CD4-positive, alpha-beta memory T cell (primary cell): ENCODE measurements at regions of chrX and their contacts with region 1.

Region 1: GRCh38 chrX:149470955-149471354 is 34.2 kb downstream of the IDS start:
- DNase-seq: peak; percentile 44 to 55 (median 49)
- H3K4me3 ChIP-seq: no peak overlapping the region
- H3K4me3 Mint-ChIP-seq: no peak overlapping the region
- H3K27ac ChIP-seq: no peak overlapping the region
- H3K27ac Mint-ChIP-seq: no peak overlapping the region
- H3K4me1 ChIP-seq: no peaks in the 10 kb centered on the region
- H3K4me1 Mint-ChIP-seq: peaks cover 0 to 6% (median 4%) of the 10 kb centered on the region in 4 donors
- H3K27me3 ChIP-seq: no peaks in the 10 kb centered on the region
- H3K27me3 Mint-ChIP-seq: no peaks in the 10 kb centered on the region

Region 2: DNA sequence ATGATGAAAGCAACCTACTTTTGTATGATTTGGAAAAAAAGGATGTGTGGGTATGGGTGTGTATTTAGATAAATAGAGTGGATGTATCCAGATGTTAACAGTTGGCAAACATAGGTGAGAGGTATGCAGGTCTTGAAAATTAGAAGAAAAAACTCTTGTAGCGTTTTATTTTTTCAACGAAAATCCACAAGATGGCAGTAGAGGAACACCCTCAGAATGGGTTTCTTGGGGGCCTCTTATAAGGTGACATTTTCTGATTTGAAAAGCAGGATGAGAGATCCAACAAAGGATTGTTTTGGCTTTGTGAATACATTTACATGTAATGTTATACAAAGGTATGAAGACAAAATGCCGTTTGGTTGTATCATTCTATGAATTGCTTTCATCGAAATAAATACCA is 1421.5 kb before region 1 on chrX:
- CTCF ChIA-PET with region 1: interaction called, 10 read pairs
- POLR2A ChIA-PET with region 1: no interaction called
- intact Hi-C with region 1: loop called (anchors 2 kb)
- DNase-seq: peak in 4 of 5 donors; percentile 18 to 33 (median 28)
- H3K4me3 ChIP-seq: no peak overlapping the region
- H3K4me3 Mint-ChIP-seq: no peak overlapping the region
- H3K27ac ChIP-seq: no peak overlapping the region
- H3K27ac Mint-ChIP-seq: no peak overlapping the region
- H3K4me1 ChIP-seq: no peaks in the 10 kb centered on the region
- H3K4me1 Mint-ChIP-seq: no peaks in the 10 kb centered on the region
- H3K27me3 ChIP-seq: no peaks in the 10 kb centered on the region
- H3K27me3 Mint-ChIP-seq: peaks cover 0 to 1% of the 10 kb centered on the region in 2 donors

Region 3: DNA sequence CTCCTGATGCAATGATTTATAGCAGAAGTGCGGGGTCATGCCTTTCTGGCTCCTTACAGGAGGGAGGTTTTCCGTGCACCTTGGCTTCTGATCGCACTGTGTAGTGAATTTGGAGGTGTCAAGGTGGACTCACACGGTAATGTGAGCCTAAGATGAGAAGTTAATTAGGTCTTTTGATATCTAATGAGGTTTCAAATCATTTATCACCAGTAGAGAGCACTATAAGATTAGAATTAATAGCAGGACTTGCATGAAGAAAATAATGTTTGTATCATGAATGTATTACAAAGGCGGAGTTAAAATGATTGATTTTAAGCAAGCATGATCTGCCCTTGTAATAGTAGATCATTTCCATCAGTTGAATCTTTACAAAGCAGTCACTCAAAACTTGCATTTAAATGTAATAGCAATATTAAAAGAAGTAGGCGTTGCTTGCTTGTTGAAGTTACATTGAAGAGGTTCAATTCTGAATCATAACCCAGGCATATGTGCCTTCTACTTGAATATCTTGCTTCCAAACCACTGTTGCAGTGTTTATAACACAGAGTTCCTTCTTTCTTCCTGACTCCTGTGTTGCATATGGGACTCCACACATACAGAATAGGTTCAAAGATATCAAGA is 1337.7 kb before region 1 on chrX:
- CTCF ChIA-PET with region 1: no interaction called
- POLR2A ChIA-PET with region 1: no interaction called
- intact Hi-C with region 1: loop called (anchors 1 kb)
- DNase-seq: peak in 4 of 5 donors; percentile 10 to 26 (median 18)
- H3K4me3 ChIP-seq: no peak overlapping the region
- H3K4me3 Mint-ChIP-seq: no peak overlapping the region
- H3K27ac ChIP-seq: no peak overlapping the region
- H3K27ac Mint-ChIP-seq: no peak overlapping the region
- H3K4me1 ChIP-seq: no peaks in the 10 kb centered on the region
- H3K4me1 Mint-ChIP-seq: no peaks in the 10 kb centered on the region
- H3K27me3 ChIP-seq: no peaks in the 10 kb centered on the region
- H3K27me3 Mint-ChIP-seq: peaks cover 0 to 2% of the 10 kb centered on the region in 2 donors

Region 4: DNA sequence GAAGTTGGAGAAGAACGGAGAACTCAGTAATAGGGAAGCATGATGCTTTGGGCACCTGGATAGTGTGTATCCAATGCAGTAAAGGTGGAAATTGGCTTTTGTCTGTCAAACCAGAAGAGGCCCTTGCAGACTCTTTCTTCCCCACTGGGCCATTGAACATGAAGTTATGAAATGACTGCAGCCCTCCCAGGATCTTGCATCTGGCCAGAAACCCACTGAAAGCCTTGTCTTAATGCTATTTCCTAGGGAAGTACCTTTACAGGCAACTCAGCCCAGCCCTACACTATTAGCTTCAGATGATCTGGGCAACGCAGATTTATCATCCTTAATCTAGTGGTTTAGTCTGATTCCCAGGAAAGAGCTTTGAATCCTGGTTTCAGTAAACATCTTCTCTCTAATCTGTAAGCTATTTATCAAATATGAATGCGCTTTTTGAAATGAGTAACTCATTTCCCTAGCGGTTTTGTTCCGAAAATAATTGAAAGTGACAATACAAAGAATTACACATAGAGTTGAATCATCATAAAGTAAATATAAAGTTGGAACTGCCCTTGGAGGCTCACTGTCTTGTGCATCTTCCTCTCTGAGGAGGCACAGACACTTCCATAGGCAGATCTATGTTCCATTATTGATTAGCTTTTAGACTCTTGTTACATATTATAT is 430.0 kb before region 1 on chrX:
- CTCF ChIA-PET with region 1: no interaction called
- POLR2A ChIA-PET with region 1: no interaction called
- intact Hi-C with region 1: no loop called
- DNase-seq: no peak
- H3K4me3 ChIP-seq: no peak overlapping the region
- H3K4me3 Mint-ChIP-seq: no peak overlapping the region
- H3K27ac ChIP-seq: no peak overlapping the region
- H3K27ac Mint-ChIP-seq: no peak overlapping the region
- H3K4me1 ChIP-seq: no peaks in the 10 kb centered on the region
- H3K4me1 Mint-ChIP-seq: no peaks in the 10 kb centered on the region
- H3K27me3 ChIP-seq: no peaks in the 10 kb centered on the region
- H3K27me3 Mint-ChIP-seq: no peaks in the 10 kb centered on the region

Region 5: GRCh38 chrX:149286940-149287349 is 184.0 kb before region 1 on chrX:
- CTCF ChIA-PET with region 1: interaction called, 6 read pairs
- POLR2A ChIA-PET with region 1: no interaction called
- intact Hi-C with region 1: loop called (anchors 5 kb)
- DNase-seq: peak in 4 of 5 donors; percentile 38 to 50 (median 46)
- H3K4me3 ChIP-seq: no peak overlapping the region
- H3K4me3 Mint-ChIP-seq: no peak overlapping the region
- H3K27ac ChIP-seq: no peak overlapping the region
- H3K27ac Mint-ChIP-seq: no peak overlapping the region
- H3K4me1 ChIP-seq: no peaks in the 10 kb centered on the region
- H3K4me1 Mint-ChIP-seq: no peaks in the 10 kb centered on the region
- H3K27me3 ChIP-seq: no peaks in the 10 kb centered on the region
- H3K27me3 Mint-ChIP-seq: peaks cover 0 to 4% of the 10 kb centered on the region in 2 donors